Activated naive CD4-positive, alpha-beta T cell treated with anti-CD3 and anti-CD28 coated beads for 36 hours (primary cell): ENCODE measurements at regions of chr1 and their contacts with region 1.

Region 1: GRCh38 chr1:202274611-202275010 is 67.1 kb downstream of the UBE2T start:
- DNase-seq: peak; percentile 79
- H3K4me3 Mint-ChIP-seq: no peak overlapping the region
- H3K27ac Mint-ChIP-seq: no peak overlapping the region
- H3K4me1 Mint-ChIP-seq: no peaks in the 10 kb centered on the region
- H3K27me3 Mint-ChIP-seq: peaks cover 5% of the 10 kb centered on the region

Region 2: GRCh38 chr1:202192770-202193613 is 81.6 kb before region 1 on chr1:
- CTCF ChIA-PET with region 1: interaction called, 7 read pairs
- intact Hi-C with region 1: loop called (anchors 2 kb)
- DNase-seq: peak; percentile 71
- H3K4me3 Mint-ChIP-seq: no peak overlapping the region
- H3K27ac Mint-ChIP-seq: no peak overlapping the region
- H3K4me1 Mint-ChIP-seq: peaks cover 2% of the 10 kb centered on the region
- H3K27me3 Mint-ChIP-seq: peaks cover 25% of the 10 kb centered on the region

Region 3: GRCh38 chr1:202264300-202264699 is 10.3 kb before region 1 on chr1:
- CTCF ChIA-PET with region 1: interaction called, 11 read pairs
- intact Hi-C with region 1: no loop called
- DNase-seq: no peak
- H3K4me3 Mint-ChIP-seq: no peak overlapping the region
- H3K27ac Mint-ChIP-seq: no peak overlapping the region
- H3K4me1 Mint-ChIP-seq: no peaks in the 10 kb centered on the region
- H3K27me3 Mint-ChIP-seq: peaks cover 27% of the 10 kb centered on the region

Region 4: DNA sequence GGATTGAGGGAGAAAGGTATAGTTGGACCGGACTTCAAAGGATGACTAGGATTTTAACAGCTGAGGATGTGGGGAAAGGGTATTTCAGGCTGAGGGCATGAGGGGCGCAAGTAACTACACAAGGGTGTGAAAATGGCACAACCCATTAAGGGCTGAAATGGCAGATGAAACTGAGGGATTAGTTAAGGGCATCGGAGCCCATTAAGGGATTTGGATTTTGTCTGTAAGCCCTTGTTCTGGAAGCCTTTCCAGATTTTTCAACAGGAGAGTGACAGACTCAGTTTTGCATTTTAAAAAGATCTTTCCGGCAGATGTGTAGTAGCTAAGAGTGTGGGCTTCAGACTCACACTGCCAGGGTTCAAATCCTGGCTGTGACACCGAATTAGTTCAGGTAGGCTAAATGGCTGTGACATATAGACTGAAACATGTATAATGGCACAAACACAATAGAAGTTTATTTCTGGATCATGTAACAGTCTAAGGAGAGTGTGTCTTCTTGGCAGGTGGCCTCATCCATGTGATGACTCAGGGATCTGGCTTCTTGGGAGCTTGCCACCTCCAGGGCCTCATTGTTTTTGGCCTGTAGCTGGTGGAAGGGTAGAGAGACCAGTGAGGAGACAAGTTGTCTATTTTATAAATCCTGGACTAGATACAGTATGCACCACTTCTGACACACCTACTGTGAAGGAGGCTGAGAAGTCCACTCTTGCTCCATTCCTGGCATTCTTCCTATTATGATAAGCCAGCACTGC is 17.5 kb after region 1 on chr1:
- CTCF ChIA-PET with region 1: interaction called, 4 read pairs
- intact Hi-C with region 1: loop called (anchors 2 kb)
- DNase-seq: no peak
- H3K4me3 Mint-ChIP-seq: no peak overlapping the region
- H3K27ac Mint-ChIP-seq: no peak overlapping the region
- H3K4me1 Mint-ChIP-seq: peaks cover 18% of the 10 kb centered on the region
- H3K27me3 Mint-ChIP-seq: no peaks in the 10 kb centered on the region

Region 5: DNA sequence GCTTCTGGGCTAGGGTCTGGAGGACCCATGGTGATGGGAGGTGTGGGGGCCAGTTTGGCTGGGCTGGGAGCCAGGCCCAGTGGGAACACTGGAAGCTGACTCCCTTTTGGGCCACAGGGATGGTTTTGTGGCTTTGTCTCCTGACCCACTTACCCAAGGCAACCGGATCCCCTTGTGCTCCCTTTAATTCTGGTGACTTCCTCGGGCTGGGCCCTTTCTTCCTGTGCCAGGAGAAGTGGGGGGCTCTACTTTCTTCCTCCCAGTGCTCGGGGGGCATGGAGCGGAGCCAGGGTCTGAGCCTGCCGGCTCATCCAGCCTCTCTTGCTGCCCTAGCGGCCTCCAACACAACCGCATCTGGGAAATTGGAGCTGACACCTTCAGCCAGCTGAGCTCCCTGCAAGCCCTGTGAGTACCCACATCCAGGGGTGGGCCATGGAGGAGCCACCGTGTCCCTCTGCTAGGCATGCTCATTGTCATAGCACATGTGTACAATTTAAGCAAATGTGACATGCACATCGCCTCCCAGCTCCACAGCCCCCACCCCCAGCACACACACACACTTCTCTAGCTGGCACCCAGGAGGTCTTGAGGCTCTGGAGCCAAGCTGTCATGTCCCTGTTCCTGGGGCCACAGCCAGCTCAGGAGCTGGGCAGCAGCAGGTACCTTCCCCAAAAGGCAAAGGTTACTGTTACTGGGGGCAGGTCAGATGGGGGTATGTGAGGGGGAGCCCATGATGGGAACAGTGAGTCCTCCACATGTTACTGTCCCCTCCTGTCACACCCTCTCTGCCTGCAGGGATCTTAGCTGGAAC is 32.1 kb after region 1 on chr1:
- CTCF ChIA-PET with region 1: interaction called, 12 read pairs
- intact Hi-C with region 1: no loop called
- DNase-seq: no peak
- H3K4me3 Mint-ChIP-seq: no peak overlapping the region
- H3K27ac Mint-ChIP-seq: no peak overlapping the region
- H3K4me1 Mint-ChIP-seq: no peaks in the 10 kb centered on the region
- H3K27me3 Mint-ChIP-seq: peaks cover 2% of the 10 kb centered on the region

Region 6: GRCh38 chr1:202315576-202316168 is 41.1 kb after region 1 on chr1:
- CTCF ChIA-PET with region 1: interaction called, 42 read pairs
- intact Hi-C with region 1: loop called (anchors 1 kb)
- DNase-seq: peak; percentile 89
- H3K4me3 Mint-ChIP-seq: no peak overlapping the region
- H3K27ac Mint-ChIP-seq: no peak overlapping the region
- H3K4me1 Mint-ChIP-seq: peaks cover 2% of the 10 kb centered on the region
- H3K27me3 Mint-ChIP-seq: no peaks in the 10 kb centered on the region

Region 7: GRCh38 chr1:202531472-202531811 is 256.8 kb after region 1 on chr1:
- CTCF ChIA-PET with region 1: no interaction called
- intact Hi-C with region 1: no loop called
- DNase-seq: no peak
- H3K4me3 Mint-ChIP-seq: no peak overlapping the region
- H3K27ac Mint-ChIP-seq: no peak overlapping the region
- H3K4me1 Mint-ChIP-seq: peaks cover 4% of the 10 kb centered on the region
- H3K27me3 Mint-ChIP-seq: no peaks in the 10 kb centered on the region